ENCODE measurements at regions of chr18 and their contacts with region 1.

Region 1: DNA sequence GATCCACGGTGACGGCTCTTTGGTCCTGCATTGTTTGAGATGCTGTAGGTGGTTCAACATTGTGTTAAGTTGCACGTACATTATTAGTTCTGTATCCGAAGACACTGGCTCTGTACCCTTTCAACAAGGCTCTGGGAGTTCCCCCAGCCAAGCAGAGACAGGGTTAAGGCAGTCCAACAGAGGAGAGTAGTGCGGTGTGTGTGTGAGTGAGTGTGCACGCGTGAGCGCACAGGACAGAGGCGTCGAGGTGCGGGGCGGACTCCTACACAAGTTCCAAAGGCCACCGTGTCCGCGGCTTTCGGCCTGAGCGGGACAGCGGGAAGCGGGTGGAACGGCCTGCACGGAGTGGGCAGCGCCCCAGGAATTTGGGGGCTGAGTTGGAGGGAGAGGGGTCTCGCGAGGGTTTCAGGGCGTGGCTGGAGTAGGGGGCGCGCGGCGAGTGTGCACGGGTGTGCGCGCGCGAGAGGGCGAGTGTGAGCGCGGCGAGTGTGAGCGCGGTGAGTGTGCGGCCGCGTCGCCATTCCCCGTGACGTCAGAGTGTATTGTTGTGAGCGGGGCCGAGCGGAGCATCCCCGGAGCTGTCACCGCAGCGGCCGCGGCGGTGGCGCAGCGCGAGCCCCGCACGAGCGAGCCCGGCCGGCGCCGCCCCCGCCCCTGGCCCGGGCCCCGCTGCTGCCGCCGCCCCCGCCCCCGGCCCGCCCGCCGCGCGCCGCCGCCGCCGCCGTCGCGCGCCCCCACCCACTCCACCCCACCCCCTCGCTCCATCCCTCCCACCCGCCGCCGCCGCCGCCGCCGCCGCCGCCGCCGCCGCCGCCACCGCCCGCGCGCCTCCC is at the start of gene ASXL3:
- DNase-seq: peak; percentile 80
- H3K4me3 ChIP-seq: peak within 1 kb of the TSS; percentile 67 to 90 (median 82)
- H3K27ac ChIP-seq: peak within 1 kb of the TSS; percentile 80 to 97 (median 92)
- H3K4me1 ChIP-seq: peaks cover 0 to 47% (median 20%) of the 10 kb centered on the region in 4 donors
- H3K27me3 ChIP-seq: no peaks in the 10 kb centered on the region
- CTCF ChIP-seq: no peak
- EP300 ChIP-seq: no peak
- POLR2A ChIP-seq: no peak
- total RNA-seq, gene ASXL3: 3.6 to 9.1 (median 7.2) TPM

Region 2: DNA sequence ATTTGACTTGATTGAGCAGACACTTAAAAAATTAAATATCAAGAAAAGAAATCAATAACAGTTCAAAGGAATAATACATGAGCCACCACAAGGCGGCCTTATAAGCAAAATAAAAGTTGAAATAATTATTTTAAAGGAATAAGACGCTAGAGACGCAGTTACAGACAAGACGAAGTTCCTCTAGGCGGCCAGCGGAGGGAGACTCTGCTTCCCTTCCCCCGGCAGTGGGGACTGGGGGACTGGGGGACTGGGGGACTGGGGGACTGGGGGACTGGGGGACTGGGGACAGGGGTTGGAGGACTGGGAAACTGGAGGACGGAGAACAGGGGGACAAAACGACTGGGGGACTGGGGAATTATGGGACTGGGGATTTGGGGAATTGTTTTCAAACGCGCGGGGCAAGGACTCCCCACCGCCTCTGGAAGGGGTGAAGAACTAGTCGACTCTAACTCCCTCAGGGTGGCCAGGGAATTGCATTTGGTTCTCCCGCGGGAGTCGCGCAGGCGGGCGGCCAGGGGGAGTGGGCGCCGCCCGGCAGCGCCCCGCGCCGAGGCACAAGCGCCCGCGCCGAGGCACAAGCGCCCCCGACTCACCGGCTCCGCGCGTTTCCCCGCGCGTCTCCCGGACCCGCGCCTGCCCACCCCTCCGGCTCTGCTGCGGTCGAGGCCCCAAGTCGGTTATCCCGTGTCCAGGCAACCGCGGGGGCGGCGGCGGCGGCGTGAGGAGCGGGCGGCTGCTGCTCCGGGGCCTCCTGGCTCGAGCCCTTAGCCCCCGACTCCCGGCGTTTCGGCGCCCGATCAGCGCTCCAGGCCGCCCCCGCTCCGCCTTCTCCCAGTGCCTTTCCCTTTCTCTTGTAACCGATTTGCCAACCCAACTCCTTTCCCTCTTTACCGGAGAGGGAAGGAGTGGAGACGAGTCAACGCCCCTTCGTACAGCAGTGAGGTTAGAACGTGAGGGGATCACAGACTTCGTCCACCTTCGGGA is 137.5 kb before region 1 on chr18 and contains the start of gene CCDC178:
- intact Hi-C with region 1: loop called (anchors 5 kb)
- DNase-seq: peak; percentile 66
- H3K4me3 ChIP-seq: peak within 1 kb of the TSS; percentile 53 to 79 (median 60)
- H3K27ac ChIP-seq: peak within 1 kb of the TSS in 3 of 4 donors; percentile 6 to 45 (median 39)
- H3K4me1 ChIP-seq: peaks cover 0 to 6% (median 6%) of the 10 kb centered on the region in 4 donors
- H3K27me3 ChIP-seq: no peaks in the 10 kb centered on the region
- CTCF ChIP-seq: peak in 1 of 4 experiments; percentile 55
- EP300 ChIP-seq: no peak
- POLR2A ChIP-seq: no peak
- total RNA-seq, gene CCDC178: under 0.01 to 1.7 (median 0.74) TPM

Measured in sigmoid colon (tissue), 7 donors.